ENCODE measurements at regions of chr4 and their contacts with region 1.

Region 1: GRCh38 chr4:79042079-79042674 is 102.9 kb upstream of the PAQR3 start:
- DNase-seq: peak; percentile 13 to 69 (median 38)
- ATAC-seq: peak; percentile 84
- H3K4me3 ChIP-seq: no peak overlapping the region
- H3K27ac ChIP-seq: no peak overlapping the region
- H3K4me1 ChIP-seq: peaks cover 0 to 8% of the 10 kb centered on the region in 2 experiments; a peak in 1 of 5 replicates
- H3K27me3 ChIP-seq: no peaks in the 10 kb centered on the region
- CTCF ChIP-seq: peak; percentile 57 to 75 (median 58); a peak in 4 of 6 replicates
- EP300 ChIP-seq: no peak
- POLR2A ChIP-seq: no peak
- RAD21 ChIP-seq: peak; percentile 82 to 91

Region 2: GRCh38 chr4:78951862-78952472 is 90.2 kb before region 1 on chr4:
- CTCF ChIA-PET with region 1: no interaction called
- POLR2A ChIA-PET with region 1: no interaction called
- in situ Hi-C with region 1: no loop called
- intact Hi-C with region 1: loop called (anchors 2 kb)
- DNase-seq: peak; percentile 56 to 70 (median 58)
- ATAC-seq: peak; percentile 86
- H3K4me3 ChIP-seq: no peak overlapping the region
- H3K27ac ChIP-seq: no peak overlapping the region
- H3K4me1 ChIP-seq: peaks cover 0 to 4% of the 10 kb centered on the region in 2 experiments; a peak in 1 of 5 replicates
- H3K27me3 ChIP-seq: no peaks in the 10 kb centered on the region
- CTCF ChIP-seq: peak; percentile 58 to 84 (median 73)
- EP300 ChIP-seq: no peak
- POLR2A ChIP-seq: no peak
- RAD21 ChIP-seq: peak; percentile 76 to 91

Region 3: DNA sequence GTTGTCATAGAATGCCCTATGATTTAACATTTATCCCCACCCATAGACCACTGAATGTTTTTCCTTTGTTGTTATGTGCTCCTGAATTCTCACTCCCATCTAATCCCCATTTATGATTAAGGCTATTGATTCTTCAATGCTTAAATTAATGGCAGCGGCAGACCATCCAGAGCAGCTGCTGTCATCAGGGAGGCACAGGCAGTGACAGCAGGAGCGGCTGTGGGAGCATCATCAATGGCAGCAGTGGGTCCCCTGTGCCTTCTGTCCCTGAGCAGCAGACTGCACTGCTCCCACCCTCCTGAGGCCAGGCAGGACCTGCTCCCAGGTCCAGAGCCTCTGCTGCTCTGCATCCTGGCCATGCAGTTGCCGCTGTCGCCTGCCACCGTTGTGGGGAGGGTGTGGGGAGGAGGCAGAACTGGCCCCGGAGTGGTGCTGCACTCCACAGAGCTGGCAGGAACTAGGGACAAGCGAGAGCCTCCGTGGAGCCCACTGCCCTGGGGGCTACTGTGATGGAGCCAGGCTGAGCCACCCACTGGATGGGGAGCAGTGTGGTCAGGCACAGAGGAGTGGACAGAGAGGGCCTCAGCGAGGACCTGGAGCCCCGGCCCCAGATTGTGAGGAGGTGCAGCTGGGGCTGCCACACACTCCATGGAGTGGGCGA is 254.7 kb after region 1 on chr4:
- CTCF ChIA-PET with region 1: no interaction called
- POLR2A ChIA-PET with region 1: no interaction called
- in situ Hi-C with region 1: no loop called
- intact Hi-C with region 1: loop called (anchors 5 kb)
- DNase-seq: no peak
- ATAC-seq: no peak
- H3K4me3 ChIP-seq: no peak overlapping the region
- H3K27ac ChIP-seq: no peak overlapping the region
- H3K4me1 ChIP-seq: peaks cover 3 to 14% of the 10 kb centered on the region in 2 experiments; a peak in 2 of 5 replicates
- H3K27me3 ChIP-seq: no peaks in the 10 kb centered on the region
- CTCF ChIP-seq: no peak
- EP300 ChIP-seq: no peak
- POLR2A ChIP-seq: no peak
- RAD21 ChIP-seq: no peak

Region 4: DNA sequence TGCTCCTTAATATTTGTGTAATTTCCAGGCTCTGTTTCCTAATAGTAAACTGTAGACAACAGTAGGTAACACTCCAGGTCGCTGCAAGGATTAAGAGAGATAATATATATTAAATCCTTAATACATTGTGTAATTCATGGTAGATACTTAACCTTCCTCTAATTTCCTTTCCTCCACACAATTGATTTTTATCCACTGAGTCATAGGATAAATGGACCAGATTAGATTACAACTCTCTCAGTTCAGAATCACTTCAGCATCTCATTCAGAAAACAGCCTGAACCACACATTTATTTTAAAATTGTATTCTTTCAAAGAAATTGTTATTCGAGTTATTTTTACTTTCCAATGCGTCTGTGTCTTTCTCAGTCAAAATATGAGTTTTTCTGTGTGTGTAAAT is 348.7 kb after region 1 on chr4:
- CTCF ChIA-PET with region 1: interaction called, 3 read pairs
- POLR2A ChIA-PET with region 1: no interaction called
- in situ Hi-C with region 1: no loop called
- intact Hi-C with region 1: loop called (anchors 1 kb)
- DNase-seq: no peak
- ATAC-seq: no peak
- H3K4me3 ChIP-seq: no peak overlapping the region
- H3K27ac ChIP-seq: no peak overlapping the region
- H3K4me1 ChIP-seq: 0 out of 5 replicates have a peak, but pooled peaks cover 0 to 3% of the 10 kb centered on the region in 2 experiments
- H3K27me3 ChIP-seq: no peaks in the 10 kb centered on the region
- CTCF ChIP-seq: no peak
- EP300 ChIP-seq: no peak
- POLR2A ChIP-seq: no peak
- RAD21 ChIP-seq: no peak

Region 5: GRCh38 chr4:79576429-79576753 is 534.2 kb after region 1 on chr4:
- CTCF ChIA-PET with region 1: no interaction called
- POLR2A ChIA-PET with region 1: no interaction called
- in situ Hi-C with region 1: loop called (anchors 10 kb)
- intact Hi-C with region 1: loop called (anchors 1 kb)
- DNase-seq: peak in 3 of 4 experiments; percentile 11 to 61 (median 27)
- ATAC-seq: peak; percentile 94
- H3K4me3 ChIP-seq: no peak overlapping the region
- H3K27ac ChIP-seq: no peak overlapping the region
- H3K4me1 ChIP-seq: no peaks in the 10 kb centered on the region; a peak in 2 of 5 replicates
- H3K27me3 ChIP-seq: no peaks in the 10 kb centered on the region
- CTCF ChIP-seq: peak; percentile 50 to 72 (median 62); a peak in 5 of 6 replicates
- EP300 ChIP-seq: no peak
- POLR2A ChIP-seq: no peak
- RAD21 ChIP-seq: peak; percentile 75 to 84